ENCODE measurements at regions of chr19 and their contacts with region 1.

Region 1: GRCh38 chr19:20776083-20777076 is at the start of gene ZNF66:
- DNase-seq: peak; percentile 97
- ATAC-seq: peak; percentile 99
- H3K4me3 Mint-ChIP-seq: peak within 1 kb of the TSS; percentile 99
- H3K27ac Mint-ChIP-seq: peak within 1 kb of the TSS; percentile 95
- H3K4me1 Mint-ChIP-seq: peaks cover 11% of the 10 kb centered on the region
- H3K27me3 Mint-ChIP-seq: no peaks in the 10 kb centered on the region
- CTCF ChIP-seq: no peak
- total RNA-seq, gene ZNF66: 34.1 to 41.6 TPM (median 34.8 TPM) in 3 replicates

Region 2: DNA sequence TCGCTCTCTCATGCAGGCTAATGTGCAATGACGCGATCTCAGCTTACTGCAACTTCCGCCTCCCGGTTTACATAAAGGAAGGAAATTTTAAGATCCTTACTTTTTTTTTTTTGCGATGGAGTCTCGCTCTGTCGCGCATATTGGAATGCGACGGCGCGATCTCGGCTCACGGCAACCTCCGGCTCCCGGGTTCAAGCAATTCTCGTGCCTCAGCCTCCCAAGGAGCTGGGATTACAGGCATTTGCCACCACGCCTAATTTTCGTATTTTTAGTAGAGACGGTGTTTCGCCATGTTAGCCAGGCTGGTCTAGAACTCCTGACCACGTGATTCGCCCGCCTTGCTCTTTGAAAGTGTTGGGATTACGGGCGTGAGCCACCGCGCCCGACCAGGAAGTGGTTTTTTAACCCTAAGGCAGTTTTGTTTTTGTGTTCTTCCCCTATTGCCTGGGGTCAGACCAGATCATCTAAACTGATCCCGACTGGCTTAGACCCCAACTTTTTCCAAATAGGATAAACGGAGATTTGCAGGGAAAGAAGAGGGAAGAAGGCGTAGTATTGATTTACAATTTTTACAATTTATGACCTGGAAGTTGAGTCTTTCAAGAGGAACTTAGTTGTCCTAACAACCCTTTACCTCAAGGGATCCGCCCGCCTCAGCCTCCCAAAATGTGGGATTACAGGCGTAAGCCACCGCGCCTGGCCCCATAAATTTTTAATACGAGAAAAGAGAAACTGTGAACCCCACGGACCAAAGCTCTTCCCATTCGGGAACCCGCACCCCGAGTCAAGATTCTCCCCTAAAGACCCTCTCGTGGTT is 352.8 kb before region 1 on chr19:
- CTCF ChIA-PET with region 1: interaction called, 3 read pairs
- POLR2A ChIA-PET with region 1: interaction called, 11 read pairs
- DNase-seq: peak; percentile 34
- ATAC-seq: no peak
- H3K4me3 Mint-ChIP-seq: peak overlapping the region; percentile 100
- H3K27ac Mint-ChIP-seq: peak overlapping the region; percentile 100
- H3K4me1 Mint-ChIP-seq: peaks cover 31% of the 10 kb centered on the region
- H3K27me3 Mint-ChIP-seq: no peaks in the 10 kb centered on the region; the same call in 1 of the 2 replicates
- CTCF ChIP-seq: no peak

Region 3: GRCh38 chr19:20558011-20558410 is 218.4 kb before region 1 on chr19:
- CTCF ChIA-PET with region 1: interaction called, 12 read pairs
- POLR2A ChIA-PET with region 1: no interaction called
- DNase-seq: peak; percentile 77
- ATAC-seq: peak; percentile 60
- H3K4me3 Mint-ChIP-seq: no peak overlapping the region
- H3K27ac Mint-ChIP-seq: no peak overlapping the region
- H3K4me1 Mint-ChIP-seq: peaks cover 16% of the 10 kb centered on the region
- H3K27me3 Mint-ChIP-seq: no peaks in the 10 kb centered on the region
- CTCF ChIP-seq: peak; percentile 46

Region 4: DNA sequence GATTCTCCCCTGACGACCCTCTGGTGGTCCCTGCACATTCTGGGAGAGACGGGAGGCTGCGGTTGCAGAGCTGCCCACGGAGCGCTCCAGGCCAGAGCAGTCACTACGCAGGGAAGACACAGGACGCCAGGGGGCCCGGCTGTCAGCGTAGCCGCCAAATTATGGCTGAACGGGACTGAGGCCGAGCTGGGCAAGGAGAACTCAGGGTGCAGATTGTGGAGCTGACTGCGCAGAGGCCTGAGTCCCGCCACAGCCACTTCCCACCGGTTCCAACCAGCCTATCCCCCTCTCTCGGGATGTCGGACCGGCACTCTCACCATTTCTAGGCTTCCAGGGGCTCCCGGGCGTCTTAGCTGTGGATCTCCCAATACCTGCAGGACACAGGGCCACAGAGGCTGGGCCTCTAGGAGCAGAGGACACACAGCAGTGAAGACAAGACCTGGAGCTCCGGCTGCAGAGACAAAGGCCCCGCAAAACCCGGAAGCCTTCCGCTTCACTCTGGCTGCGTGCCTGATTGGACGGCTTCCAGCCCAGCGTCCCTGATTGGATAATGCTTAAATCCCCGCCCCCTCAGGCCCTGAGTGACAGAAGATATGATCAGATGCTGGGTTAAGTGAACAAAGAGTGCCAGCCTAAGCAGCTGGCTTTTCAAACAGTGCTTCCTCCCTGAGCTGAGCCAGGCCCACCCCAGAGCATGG is 210.9 kb before region 1 on chr19 and contains the start of gene ZNF737:
- CTCF ChIA-PET with region 1: interaction called, 4 read pairs
- POLR2A ChIA-PET with region 1: interaction called, 20 read pairs
- DNase-seq: peak; percentile 95
- ATAC-seq: peak; percentile 98
- H3K4me3 Mint-ChIP-seq: peak within 1 kb of the TSS; percentile 99
- H3K27ac Mint-ChIP-seq: peak within 1 kb of the TSS; percentile 98
- H3K4me1 Mint-ChIP-seq: 0 out of 2 replicates have a peak, but pooled peaks cover 3% of the 10 kb centered on the region
- H3K27me3 Mint-ChIP-seq: no peaks in the 10 kb centered on the region
- CTCF ChIP-seq: no peak
- total RNA-seq, gene ZNF737: 15.6 to 20.2 TPM (median 16.2 TPM) in 3 replicates

Region 5: DNA sequence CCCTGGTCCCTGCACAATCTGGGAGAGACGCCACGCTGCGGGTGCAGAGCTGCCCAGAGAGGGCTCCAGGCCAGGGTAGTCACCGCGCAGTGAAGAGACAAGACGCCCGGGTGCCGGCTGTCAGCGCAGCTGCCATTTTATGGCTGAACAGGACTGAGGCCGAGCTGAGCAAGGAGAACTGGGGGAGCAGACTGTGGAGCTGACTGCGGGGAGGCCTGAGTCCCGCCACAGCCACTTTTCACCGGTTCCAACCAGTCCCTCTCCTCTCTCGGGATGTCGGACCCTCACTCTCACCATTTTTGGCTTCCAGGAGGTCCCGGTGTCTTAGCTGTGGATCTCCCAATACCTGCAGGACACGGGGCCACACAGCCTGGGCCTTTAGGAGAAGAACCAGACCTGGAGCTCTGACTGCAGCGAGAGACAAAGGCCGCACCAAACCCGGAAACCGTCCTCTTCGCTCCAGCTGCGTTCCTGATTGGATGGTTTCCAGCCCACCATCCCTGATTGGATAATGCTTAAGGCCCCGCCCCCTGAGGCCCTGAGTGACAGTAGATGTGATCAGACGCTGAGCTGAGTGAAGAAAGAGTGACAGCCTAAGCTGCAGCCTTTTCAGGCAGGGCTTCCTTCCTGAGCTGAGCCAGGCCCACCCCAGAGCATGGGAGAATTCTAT is 115.1 kb before region 1 on chr19 and contains the start of gene ZNF626:
- CTCF ChIA-PET with region 1: interaction called, 4 read pairs
- POLR2A ChIA-PET with region 1: interaction called, 11 read pairs
- DNase-seq: peak; percentile 97
- ATAC-seq: peak; percentile 93
- H3K4me3 Mint-ChIP-seq: peak within 1 kb of the TSS; percentile 96
- H3K27ac Mint-ChIP-seq: peak within 1 kb of the TSS; percentile 97
- H3K4me1 Mint-ChIP-seq: peaks cover 38% of the 10 kb centered on the region
- H3K27me3 Mint-ChIP-seq: peaks cover 3% of the 10 kb centered on the region; the same call in 1 of the 2 replicates
- CTCF ChIP-seq: no peak
- total RNA-seq, gene ZNF626: 15.5 to 24.4 TPM (median 17.6 TPM) in 3 replicates

Region 6: GRCh38 chr19:20726755-20727154 is 49.6 kb before region 1 on chr19:
- CTCF ChIA-PET with region 1: no interaction called
- POLR2A ChIA-PET with region 1: no interaction called
- DNase-seq: no peak
- ATAC-seq: no peak
- H3K4me3 Mint-ChIP-seq: no peak overlapping the region
- H3K27ac Mint-ChIP-seq: no peak overlapping the region
- H3K4me1 Mint-ChIP-seq: no peaks in the 10 kb centered on the region
- H3K27me3 Mint-ChIP-seq: peaks cover 4% of the 10 kb centered on the region
- CTCF ChIP-seq: no peak

Region 7: GRCh38 chr19:20923077-20923871 is 146.9 kb after region 1 on chr19 and contains the start of gene ZNF85:
- CTCF ChIA-PET with region 1: no interaction called
- POLR2A ChIA-PET with region 1: interaction called, 15 read pairs
- DNase-seq: peak; percentile 91
- ATAC-seq: peak; percentile 98
- H3K4me3 Mint-ChIP-seq: peak within 1 kb of the TSS; percentile 99
- H3K27ac Mint-ChIP-seq: peak within 1 kb of the TSS; percentile 99
- H3K4me1 Mint-ChIP-seq: peaks cover 16% of the 10 kb centered on the region
- H3K27me3 Mint-ChIP-seq: no peaks in the 10 kb centered on the region
- CTCF ChIP-seq: no peak
- total RNA-seq, gene ZNF85: 22.8 to 23.7 TPM (median 22.8 TPM) in 3 replicates

Region 8: DNA sequence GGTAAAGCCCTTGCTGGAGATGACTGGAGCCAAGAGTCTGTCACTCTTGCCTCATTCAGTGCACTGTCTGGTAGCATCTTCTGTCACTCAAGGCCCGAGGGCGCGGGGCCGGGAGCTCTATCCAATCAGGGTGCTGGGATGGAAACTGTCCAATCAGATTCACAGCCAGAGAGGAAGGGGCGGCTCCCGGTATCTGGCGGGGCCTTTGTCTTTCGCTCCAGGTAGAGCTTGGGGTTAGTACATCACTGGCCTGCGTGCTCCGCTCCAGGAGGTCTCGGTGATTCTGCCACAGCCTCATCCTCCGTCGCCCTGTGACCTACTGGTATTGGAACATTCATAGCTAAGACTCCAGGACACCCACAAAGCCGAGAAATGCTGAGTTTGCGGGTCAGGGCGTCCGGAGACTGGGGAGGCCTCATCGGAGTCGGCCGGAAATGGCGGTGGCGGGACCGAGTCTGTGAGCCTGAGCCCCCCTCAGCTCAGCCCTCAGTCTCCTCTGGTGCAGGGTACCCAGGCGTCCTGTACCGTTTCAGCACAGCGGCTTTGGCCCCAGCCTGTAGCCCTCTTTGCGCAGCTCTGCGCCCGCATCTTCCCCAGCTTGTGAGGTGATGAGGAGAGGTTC is 223.5 kb after region 1 on chr19:
- CTCF ChIA-PET with region 1: no interaction called
- POLR2A ChIA-PET with region 1: interaction called, 10 read pairs
- DNase-seq: peak; percentile 93
- ATAC-seq: peak; percentile 98
- H3K4me3 Mint-ChIP-seq: peak overlapping the region; percentile 86
- H3K27ac Mint-ChIP-seq: peak overlapping the region; percentile 95
- H3K4me1 Mint-ChIP-seq: peaks cover 21% of the 10 kb centered on the region
- H3K27me3 Mint-ChIP-seq: no peaks in the 10 kb centered on the region; the same call in 1 of the 2 replicates
- CTCF ChIP-seq: no peak

Measured in WTC11 (cell line).